Cardiac septum (tissue), 1 donor: ENCODE measurements at regions of chr2 and their contacts with region 1.

Region 1: DNA sequence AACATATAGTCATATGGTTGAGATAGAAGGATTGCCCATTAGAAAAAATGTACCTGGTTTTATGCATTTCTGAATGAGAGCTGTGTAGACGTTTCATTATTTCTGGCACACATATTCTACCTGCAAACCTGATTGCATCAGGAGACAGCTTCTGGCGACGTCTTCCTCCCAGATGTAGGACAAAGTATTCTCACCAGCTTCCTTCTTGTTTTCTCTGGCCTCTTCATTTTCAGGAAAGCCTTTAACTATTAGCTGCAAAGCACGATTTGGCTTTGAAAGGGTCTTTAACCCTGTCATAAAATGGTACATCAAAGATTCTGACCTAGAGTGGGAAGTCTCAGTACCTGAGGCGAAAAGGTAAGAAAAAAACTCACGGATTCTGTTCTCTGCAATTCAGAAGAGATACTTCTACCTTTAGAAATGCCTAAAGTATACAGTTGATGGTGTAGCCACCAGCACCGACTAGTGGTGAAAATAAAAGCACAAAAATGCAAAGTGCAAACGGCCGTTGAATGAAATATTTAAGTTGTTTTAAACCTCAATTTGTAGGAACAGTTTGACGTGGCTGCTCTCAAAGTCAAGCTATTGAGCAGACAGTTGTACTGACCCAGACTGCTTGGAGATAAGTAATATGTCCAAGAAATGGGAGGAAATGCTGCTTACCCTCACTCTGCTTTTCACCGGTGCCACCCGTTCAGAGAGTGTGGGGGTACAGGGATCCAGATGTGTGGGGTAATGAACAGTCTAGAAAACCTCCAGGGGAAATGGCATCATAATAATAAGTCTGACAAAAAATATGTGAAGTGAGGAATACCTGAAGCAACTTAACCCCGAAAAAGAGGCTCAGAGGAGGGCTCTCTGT is 20.2 kb downstream of the IL18RAP start:
- DNase-seq: no peak

Region 2: GRCh38 chr2:102005989-102006885 is 437.0 kb before region 1 on chr2:
- intact Hi-C with region 1: loop called (anchors 5 kb)
- DNase-seq: no peak

Region 3: GRCh38 chr2:102187496-102188150 is 255.6 kb before region 1 on chr2:
- intact Hi-C with region 1: loop called (anchors 10 kb)
- DNase-seq: peak; percentile 85

Region 4: GRCh38 chr2:102251042-102251848 is 192.0 kb before region 1 on chr2:
- intact Hi-C with region 1: loop called (anchors 5 kb)
- DNase-seq: peak; percentile 92

Region 5: DNA sequence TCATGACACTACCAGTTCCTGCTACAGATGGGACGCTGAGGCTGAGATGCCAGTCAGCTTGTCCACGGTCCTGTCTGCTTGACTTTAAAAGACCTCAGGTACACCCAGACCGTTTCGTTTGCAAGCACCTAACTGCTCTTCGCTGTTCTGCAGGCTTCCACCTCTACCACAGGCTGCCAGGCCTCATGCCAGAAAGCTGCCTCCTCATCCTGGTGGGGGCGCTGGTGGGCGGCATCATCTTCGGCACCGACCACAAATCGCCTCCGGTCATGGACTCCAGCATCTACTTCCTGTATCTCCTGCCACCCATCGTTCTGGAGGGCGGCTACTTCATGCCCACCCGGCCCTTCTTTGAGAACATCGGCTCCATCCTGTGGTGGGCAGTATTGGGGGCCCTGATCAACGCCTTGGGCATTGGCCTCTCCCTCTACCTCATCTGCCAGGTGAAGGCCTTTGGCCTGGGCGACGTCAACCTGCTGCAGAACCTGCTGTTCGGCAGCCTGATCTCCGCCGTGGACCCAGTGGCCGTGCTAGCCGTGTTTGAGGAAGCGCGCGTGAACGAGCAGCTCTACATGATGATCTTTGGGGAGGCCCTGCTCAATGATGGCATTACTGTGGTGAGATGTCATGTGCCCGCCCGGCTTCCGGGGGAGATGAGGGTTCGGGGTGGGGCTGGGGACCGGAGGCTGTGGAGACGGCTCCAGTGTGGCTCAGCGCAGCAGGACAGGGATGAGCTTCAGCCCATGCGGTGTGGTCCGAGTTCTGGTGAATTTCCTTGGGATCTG is 35.7 kb after region 1 on chr2:
- intact Hi-C with region 1: no loop called
- DNase-seq: no peak

Region 6: DNA sequence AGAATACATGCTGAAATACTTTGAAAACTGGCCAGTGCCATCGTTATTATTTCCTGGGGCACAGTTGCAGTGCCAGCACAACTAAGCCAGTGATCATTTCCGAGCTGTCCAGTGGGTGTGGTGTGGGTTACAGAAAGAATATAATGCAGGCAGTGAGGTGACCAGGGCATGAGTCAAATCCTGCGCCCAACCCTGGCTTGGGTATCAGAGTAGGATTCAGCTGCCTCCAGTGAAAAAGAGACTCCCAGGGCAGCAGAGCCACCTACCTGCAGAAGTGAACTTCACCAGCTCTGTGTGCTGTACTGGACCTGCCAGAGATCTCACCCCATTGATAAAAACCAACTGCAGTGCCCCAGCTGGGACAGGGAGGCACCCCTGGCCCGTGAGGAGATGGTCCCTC is 194.2 kb after region 1 on chr2:
- intact Hi-C with region 1: no loop called
- DNase-seq: no peak